ENCODE measurements at regions of chr2 and their contacts with region 1.

Region 1: DNA sequence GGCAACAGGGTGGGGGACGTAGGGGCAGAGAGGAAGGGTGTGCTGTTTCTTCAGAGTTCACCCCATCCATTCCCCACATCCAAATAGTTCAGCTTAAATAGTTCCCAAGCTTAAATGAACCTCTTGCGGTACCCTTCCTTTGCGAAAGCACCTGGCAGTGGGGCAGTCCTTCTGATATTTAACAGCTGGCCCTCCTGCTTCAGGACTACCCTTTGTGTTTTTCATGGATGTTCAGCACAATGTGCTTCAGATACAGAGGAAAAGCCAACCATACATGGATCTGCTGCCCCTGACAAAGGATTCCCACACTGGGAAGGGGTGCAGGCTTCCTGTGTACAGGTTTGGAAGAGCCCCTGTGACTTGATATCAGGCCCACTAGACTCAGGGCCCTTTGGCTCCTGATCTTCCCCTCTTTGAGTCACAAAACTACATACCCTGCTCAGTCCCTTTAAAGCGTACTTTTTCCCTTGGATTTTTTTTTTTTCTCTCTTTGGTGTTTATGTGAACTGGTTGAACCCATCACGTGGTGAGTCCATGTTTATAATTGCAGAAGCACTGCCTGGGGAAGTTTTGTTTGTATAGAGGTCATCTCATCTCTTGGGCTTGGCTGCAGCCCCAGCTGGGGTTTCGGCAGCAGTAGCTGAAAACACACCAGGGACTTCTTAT is 45.3 kb upstream of the IGFBP5 start:
- DNase-seq: peak; percentile 89
- H3K4me3 ChIP-seq: no peak overlapping the region
- H3K27ac ChIP-seq: peak overlapping the region; percentile 65 to 87 (median 83)
- H3K4me1 ChIP-seq: peaks cover 0 to 79% (median 66%) of the 10 kb centered on the region in 4 donors
- H3K27me3 ChIP-seq: no peaks in the 10 kb centered on the region
- CTCF ChIP-seq: no peak
- EP300 ChIP-seq: peak in 3 of 4 donors; percentile 55 to 73 (median 56)
- POLR2A ChIP-seq: no peak

Region 2: DNA sequence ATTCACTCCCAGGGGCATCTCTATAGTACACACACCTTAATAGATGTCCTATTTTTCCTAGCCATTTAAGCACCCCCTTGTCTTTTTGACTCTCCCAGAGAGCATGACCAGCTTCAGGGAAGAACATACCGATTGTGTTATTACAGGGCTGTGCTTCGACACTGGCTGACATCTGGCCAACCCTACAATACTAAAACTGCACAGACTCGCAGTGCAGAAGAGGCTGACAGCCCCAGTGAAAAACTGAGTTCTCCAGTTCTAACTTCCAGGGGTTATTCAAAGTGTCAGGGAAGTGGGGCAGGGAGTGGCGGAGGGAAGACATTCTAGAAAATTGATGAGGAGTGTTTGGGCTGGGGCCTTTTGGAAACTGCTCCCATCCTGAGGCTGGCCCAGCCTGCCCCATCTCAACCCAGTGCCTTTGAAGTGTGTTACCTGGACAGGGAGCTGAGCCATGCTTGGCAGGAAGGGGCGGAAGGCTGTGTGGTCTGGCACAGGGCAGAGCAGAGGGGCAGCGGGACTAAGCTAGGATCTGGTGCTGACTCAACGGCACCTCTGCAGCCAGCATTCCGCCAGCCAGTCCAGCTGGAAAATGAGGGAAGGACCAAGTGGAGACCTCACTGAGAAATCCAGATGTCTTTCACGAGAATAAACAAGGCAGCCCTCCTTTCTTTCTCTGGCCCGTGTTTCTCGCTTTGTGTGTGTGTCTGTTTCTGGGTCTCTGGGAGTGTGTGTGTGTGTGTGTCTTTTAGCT is 30.0 kb before region 1 on chr2:
- intact Hi-C with region 1: loop called (anchors 2 kb)
- DNase-seq: peak; percentile 89
- H3K4me3 ChIP-seq: peak overlapping the region in 1 of 4 donors; percentile 2
- H3K27ac ChIP-seq: peak overlapping the region; percentile 80 to 91 (median 88)
- H3K4me1 ChIP-seq: peaks cover 0 to 54% (median 39%) of the 10 kb centered on the region in 4 donors
- H3K27me3 ChIP-seq: no peaks in the 10 kb centered on the region
- CTCF ChIP-seq: no peak
- EP300 ChIP-seq: no peak
- POLR2A ChIP-seq: no peak

Region 3: DNA sequence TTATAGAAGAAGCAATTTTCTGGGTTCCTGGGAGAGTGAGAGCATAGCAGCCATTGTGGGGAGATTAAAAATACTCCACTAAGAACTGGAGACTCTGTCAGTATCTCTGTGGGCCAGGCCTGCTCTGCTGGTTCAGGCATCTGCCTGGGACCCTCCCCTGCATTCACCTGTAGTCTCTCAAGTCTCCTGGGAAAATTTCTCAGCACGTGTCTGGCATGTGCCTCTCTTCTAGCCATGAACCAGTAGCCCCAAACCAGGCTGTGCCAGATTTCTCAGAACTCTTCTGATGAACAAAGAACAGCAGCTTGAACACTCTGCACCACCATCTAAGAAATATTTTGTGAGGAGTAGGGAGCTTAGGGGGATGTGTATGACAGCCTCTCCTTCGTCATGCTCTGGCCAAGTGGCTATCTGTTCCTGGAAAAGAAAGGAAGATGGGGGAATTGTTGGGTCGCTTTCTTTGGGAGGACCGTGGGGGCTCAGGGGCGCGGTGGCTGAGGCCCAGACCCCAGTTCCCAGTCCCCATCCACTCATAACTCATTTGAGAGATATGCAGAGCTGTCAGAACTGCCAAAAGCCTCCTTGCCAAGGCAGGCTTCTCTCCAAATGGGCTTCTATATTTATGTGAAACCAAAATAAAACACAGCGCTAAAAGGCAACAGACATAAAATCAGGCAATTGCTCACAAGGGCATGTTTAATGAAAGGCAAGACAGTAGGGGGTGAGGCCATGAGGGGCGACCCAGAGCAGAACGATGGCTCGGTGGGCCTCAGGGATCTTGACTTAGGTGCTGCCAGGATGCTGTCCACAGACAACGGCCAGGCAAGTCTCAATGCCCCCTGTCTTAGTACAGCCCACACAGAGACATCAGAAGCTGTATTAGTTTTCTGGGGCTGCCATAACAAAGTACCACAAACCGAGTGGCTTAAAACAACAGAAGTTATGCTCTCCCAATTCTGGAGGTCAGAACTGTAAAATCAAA is 233.9 kb after region 1 on chr2:
- intact Hi-C with region 1: loop called (anchors 10 kb)
- DNase-seq: peak; percentile 64
- H3K4me3 ChIP-seq: no peak overlapping the region
- H3K27ac ChIP-seq: peak overlapping the region; percentile 51 to 71 (median 62)
- H3K4me1 ChIP-seq: peaks cover 0 to 21% (median 16%) of the 10 kb centered on the region in 4 donors
- H3K27me3 ChIP-seq: no peaks in the 10 kb centered on the region
- CTCF ChIP-seq: no peak
- EP300 ChIP-seq: no peak
- POLR2A ChIP-seq: no peak